H1 (cell line): ENCODE measurements at regions of chr17 and their contacts with region 1.

Region 1: GRCh38 chr17:49290690-49291359 is 60.2 kb upstream of the PHOSPHO1 start:
- DNase-seq: no peak
- H3K4me3 ChIP-seq: no peak overlapping the region
- H3K27ac ChIP-seq: no peak overlapping the region
- H3K4me1 ChIP-seq: no peaks in the 10 kb centered on the region
- H3K27me3 ChIP-seq: no peaks in the 10 kb centered on the region
- CTCF ChIP-seq: peak in 2 of 3 experiments; percentile 46 to 62; a peak in 2 of 4 replicates
- EP300 ChIP-seq: no peak
- POLR2A ChIP-seq: no peak
- RAD21 ChIP-seq: peak; percentile 62 to 66

Region 2: DNA sequence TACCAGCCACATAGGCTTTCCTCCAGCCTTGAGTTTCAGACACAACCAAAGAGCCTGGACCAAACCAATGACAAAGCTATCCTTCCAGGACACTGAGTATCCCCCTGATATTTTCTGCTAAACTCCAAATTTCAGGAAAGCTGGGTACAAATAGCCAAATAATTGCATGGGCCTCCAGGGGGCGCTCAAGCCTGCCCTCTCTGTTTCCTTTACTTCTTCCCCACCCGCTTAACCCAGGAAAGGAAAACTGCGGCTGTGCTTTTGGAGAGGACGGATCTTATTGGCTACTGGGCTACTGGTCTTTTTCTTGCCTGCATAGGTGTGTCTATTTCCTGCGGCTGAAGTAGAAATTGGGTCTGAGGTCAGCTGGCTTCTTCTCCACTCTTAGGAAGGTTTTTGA is 110.5 kb before region 1 on chr17:
- CTCF ChIA-PET with region 1: interaction called, 10 read pairs
- POLR2A ChIA-PET with region 1: no interaction called
- DNase-seq: peak in 1 of 2 experiments; percentile 89
- H3K4me3 ChIP-seq: no peak overlapping the region
- H3K27ac ChIP-seq: no peak overlapping the region
- H3K4me1 ChIP-seq: no peaks in the 10 kb centered on the region
- H3K27me3 ChIP-seq: no peaks in the 10 kb centered on the region
- CTCF ChIP-seq: peak; percentile 60 to 93 (median 75)
- EP300 ChIP-seq: no peak
- POLR2A ChIP-seq: no peak
- RAD21 ChIP-seq: peak; percentile 77 to 81

Region 3: DNA sequence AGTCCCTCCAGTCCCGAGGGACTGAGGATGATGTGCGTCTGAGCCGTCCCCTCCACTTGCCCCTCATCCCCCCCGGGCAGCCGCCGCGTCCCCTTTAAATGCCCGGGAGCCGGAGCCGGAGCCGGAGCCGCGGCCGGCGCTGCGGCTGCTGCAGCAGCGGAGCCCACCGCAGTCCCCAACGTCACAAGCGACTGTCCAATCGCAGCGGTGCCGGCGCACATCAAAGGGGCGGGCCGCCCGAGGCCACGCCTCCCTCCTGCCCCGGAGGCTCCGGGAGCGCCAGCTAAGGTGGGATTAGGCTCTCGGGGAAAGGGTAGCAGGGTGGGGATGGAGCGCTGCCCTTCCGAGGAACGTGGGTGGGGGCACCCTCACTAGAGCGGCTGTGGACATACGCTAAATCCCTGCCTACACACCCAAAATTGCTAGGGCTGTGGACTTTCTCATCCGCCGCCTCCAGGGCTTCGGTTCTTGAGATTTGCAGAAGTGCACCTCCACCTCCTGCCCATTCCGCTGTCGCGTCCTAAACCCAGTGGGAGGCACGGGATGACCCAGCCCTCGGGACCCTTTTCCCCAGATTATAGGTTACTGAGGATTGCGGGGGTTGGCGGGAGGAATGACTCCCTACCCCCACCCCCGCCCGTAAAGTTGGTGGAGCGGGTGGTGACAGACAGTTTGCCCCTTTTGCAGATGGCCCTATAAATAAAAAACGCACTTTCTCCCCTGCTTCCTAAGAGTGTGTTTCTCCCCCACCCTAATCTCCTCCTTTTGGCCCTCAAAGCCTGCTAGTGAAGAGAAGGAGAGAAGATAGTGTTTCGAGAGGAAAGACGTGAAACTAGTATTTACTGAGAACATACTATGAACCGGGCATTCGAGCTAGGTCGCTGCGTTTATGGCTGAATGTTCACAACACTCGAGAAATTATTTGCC is 59.9 kb before region 1 on chr17 and contains the start of gene PHOSPHO1:
- CTCF ChIA-PET with region 1: interaction called, 38 read pairs
- POLR2A ChIA-PET with region 1: no interaction called
- DNase-seq: peak; percentile 73 to 96
- H3K4me3 ChIP-seq: peak within 1 kb of the TSS; percentile 69 to 82 (median 76)
- H3K27ac ChIP-seq: no peak within 1 kb of the TSS
- H3K4me1 ChIP-seq: peaks cover 0 to 2% (median 0%) of the 10 kb centered on the region in 4 experiments; a peak in 1 of 7 replicates
- H3K27me3 ChIP-seq: peaks cover 7 to 41% (median 32%) of the 10 kb centered on the region in 4 experiments; a peak in 6 of 7 replicates
- CTCF ChIP-seq: no peak
- EP300 ChIP-seq: no peak
- POLR2A ChIP-seq: no peak
- RAD21 ChIP-seq: no peak
- total RNA-seq, gene PHOSPHO1: 0.34 and 0.73 TPM in 2 replicates

Region 4: DNA sequence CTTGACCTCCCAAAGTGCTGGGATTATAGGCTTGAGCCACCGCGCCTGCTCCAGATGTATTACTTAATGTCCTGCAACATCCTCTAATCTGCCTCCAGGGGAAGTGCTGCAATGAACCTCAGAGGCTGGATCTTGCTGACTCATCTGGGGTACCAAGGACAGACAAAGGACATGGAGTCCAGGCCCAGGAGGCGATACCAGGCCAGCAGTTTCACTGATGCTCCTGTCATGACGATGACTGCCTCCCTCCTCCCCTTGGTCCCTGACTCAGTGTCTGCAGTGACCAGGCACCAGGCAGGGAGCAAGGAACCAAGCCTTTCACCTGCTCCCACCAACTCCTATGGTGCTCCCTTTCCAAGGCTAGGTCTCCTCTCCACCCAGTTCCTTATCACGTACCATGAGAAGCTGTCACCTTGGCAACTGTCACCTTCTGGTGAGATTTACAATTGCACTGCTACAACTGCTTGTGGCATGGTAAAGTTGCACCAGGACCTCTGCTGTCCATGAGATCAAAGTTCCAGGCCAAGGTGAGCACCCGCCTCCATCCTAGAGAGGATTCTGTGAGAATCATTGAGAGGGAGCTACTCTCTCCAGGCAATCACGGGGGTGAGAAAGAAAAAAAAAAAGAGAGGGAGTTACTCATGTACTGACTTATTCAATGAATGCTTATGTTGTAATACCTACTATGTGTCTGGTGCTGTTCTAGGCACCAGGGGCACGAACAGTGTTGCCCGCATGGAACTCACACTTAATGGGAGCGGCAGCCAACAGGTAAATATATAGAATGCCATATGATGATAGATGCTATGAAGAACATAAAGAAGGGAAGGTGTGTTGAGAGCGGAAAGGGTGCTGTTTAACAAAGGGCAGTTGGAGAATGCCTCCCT is 38.4 kb before region 1 on chr17:
- CTCF ChIA-PET with region 1: interaction called, 13 read pairs
- POLR2A ChIA-PET with region 1: interaction called, 3 read pairs
- DNase-seq: no peak
- H3K4me3 ChIP-seq: no peak overlapping the region
- H3K27ac ChIP-seq: no peak overlapping the region
- H3K4me1 ChIP-seq: no peaks in the 10 kb centered on the region; a peak in 1 of 7 replicates
- H3K27me3 ChIP-seq: no peaks in the 10 kb centered on the region
- CTCF ChIP-seq: no peak
- EP300 ChIP-seq: no peak
- POLR2A ChIP-seq: no peak
- RAD21 ChIP-seq: no peak

Region 5: DNA sequence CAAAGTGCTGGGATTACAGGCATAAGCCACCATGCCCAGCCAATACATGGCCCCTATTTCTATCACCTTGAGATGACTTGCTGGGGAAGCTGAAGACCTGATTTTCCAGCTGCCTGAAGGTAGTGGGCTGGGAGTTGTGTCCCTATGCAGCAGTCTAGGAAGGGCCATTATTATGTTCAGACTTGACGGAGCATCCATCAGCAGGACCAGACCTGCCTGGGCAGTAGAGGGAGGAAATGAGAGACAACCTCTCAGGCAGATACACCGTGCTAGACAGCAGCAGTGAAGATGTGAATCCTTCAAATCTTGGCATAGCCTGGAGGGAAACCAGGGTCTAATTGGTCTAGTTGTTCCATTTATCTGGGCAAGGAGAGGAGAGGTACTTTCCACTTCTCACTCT is 24.6 kb before region 1 on chr17:
- CTCF ChIA-PET with region 1: interaction called, 12 read pairs
- POLR2A ChIA-PET with region 1: interaction called, 3 read pairs
- DNase-seq: no peak
- H3K4me3 ChIP-seq: no peak overlapping the region
- H3K27ac ChIP-seq: no peak overlapping the region
- H3K4me1 ChIP-seq: no peaks in the 10 kb centered on the region
- H3K27me3 ChIP-seq: peaks cover 0 to 1% (median 0%) of the 10 kb centered on the region in 4 experiments; a peak in 1 of 7 replicates
- CTCF ChIP-seq: no peak
- EP300 ChIP-seq: no peak
- POLR2A ChIP-seq: no peak
- RAD21 ChIP-seq: no peak

Region 6: GRCh38 chr17:49315551-49316257 is 24.9 kb after region 1 on chr17:
- CTCF ChIA-PET with region 1: interaction called, 10 read pairs
- POLR2A ChIA-PET with region 1: no interaction called
- DNase-seq: peak; percentile 31 to 62
- H3K4me3 ChIP-seq: no peak overlapping the region
- H3K27ac ChIP-seq: no peak overlapping the region
- H3K4me1 ChIP-seq: no peaks in the 10 kb centered on the region
- H3K27me3 ChIP-seq: no peaks in the 10 kb centered on the region
- CTCF ChIP-seq: peak; percentile 27 to 83 (median 71)
- EP300 ChIP-seq: no peak
- POLR2A ChIP-seq: no peak
- RAD21 ChIP-seq: peak; percentile 96 to 98

Region 7: GRCh38 chr17:49344914-49345313 is 54.1 kb after region 1 on chr17:
- CTCF ChIA-PET with region 1: no interaction called
- POLR2A ChIA-PET with region 1: no interaction called
- DNase-seq: no peak
- H3K4me3 ChIP-seq: no peak overlapping the region
- H3K27ac ChIP-seq: no peak overlapping the region
- H3K4me1 ChIP-seq: no peaks in the 10 kb centered on the region
- H3K27me3 ChIP-seq: no peaks in the 10 kb centered on the region
- CTCF ChIP-seq: no peak
- EP300 ChIP-seq: no peak
- POLR2A ChIP-seq: no peak
- RAD21 ChIP-seq: no peak